ENCODE measurements at regions of chr3 and their contacts with region 1.

Region 1: DNA sequence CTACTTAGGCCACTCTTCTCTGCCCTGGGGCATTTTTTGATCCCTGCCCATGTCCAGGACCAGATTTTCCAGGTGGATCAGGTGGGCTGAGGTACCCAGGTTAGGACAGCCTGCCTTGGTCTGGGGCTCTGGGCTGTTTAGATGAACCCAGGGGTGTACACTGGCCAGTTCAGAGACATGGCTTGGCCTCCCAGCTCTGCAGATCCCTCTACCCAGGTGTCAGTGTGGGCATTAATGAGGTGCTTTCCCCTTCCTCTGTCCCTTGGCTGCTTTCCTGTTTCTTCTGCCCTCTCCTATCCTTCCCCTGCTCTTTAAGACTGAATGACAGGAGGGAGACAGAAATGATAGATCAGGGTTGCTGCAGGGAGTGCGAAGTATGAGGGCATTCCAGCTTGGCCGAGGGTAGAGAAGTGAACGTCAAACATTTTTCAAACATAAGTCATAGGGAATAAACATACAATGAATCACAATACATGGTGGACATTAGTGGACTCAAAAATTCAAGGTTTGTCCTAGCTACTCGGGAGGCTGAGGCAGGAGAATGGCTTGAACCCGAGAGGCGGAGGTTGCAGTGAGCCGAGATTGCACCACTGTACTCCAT is 30.5 kb downstream of the RTP1 start:
- DNase-seq: no peak
- H3K4me3 ChIP-seq: no peak overlapping the region
- H3K27ac ChIP-seq: no peak overlapping the region
- H3K4me1 ChIP-seq: no peaks in the 10 kb centered on the region
- H3K27me3 ChIP-seq: peaks cover 0 to 61% (median 0%) of the 10 kb centered on the region in 7 donors
- CTCF ChIP-seq: no peak
- POLR2A ChIP-seq: no peak

Region 2: DNA sequence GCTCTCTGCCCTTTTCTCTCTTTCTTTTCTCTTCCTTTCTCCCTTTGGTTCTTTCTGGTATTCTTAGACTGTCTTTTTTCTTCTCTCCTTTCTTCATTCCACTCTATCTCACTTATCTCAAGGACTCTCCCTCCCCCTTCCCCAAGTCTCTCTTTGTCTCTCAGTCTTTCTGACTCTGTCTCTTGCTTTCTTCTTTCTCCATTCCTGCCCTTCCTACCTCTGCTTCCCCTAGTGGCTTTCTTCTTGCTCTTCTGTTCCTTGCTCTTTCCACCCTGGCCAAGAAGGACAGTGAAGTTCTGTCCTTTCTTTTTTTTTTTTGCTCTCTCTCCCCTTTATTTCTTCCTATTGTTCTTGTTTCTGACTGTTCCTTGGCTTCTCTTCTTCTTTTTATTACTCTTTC is 66.2 kb before region 1 on chr3:
- intact Hi-C with region 1: no loop called
- DNase-seq: no peak
- H3K4me3 ChIP-seq: no peak overlapping the region
- H3K27ac ChIP-seq: no peak overlapping the region
- H3K4me1 ChIP-seq: peaks cover 0 to 4% (median 0%) of the 10 kb centered on the region in 6 donors
- H3K27me3 ChIP-seq: peaks cover 0 to 15% (median 0%) of the 10 kb centered on the region in 7 donors
- CTCF ChIP-seq: no peak
- POLR2A ChIP-seq: no peak

Region 3: GRCh38 chr3:187319699-187320302 is 92.0 kb after region 1 on chr3:
- intact Hi-C with region 1: loop called (anchors 5 kb)
- DNase-seq: peak; percentile 75
- H3K4me3 ChIP-seq: peak overlapping the region in 1 of 8 donors; percentile 53
- H3K27ac ChIP-seq: no peak overlapping the region
- H3K4me1 ChIP-seq: peaks cover 6 to 16% (median 13%) of the 10 kb centered on the region in 6 donors
- H3K27me3 ChIP-seq: peaks cover 0 to 50% (median 5%) of the 10 kb centered on the region in 7 donors
- CTCF ChIP-seq: peak; percentile 58 to 82 (median 75)
- POLR2A ChIP-seq: no peak

Region 4: DNA sequence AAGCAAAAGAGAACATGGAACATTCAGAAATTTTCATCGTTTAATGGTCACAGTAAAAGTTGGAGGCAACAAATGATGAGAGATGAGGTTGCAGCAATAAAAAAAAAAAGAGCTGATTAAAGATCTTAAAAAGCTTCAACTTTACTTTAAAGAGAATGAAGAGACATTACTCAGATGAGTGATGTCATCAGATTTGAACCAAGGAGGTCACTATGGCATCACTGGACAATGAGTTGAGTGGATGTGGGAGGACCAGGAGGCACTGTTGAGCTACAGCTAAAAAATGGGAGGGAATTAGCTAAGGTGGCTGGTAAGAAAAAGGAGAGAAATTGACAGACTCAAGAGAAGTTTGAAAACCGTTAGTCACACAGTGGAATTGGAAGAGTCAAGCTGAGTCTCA is 304.1 kb after region 1 on chr3:
- intact Hi-C with region 1: no loop called
- DNase-seq: no peak
- H3K4me3 ChIP-seq: no peak overlapping the region
- H3K27ac ChIP-seq: no peak overlapping the region
- H3K4me1 ChIP-seq: no peaks in the 10 kb centered on the region
- H3K27me3 ChIP-seq: peaks cover 0 to 20% (median 0%) of the 10 kb centered on the region in 7 donors
- CTCF ChIP-seq: no peak
- POLR2A ChIP-seq: no peak

Region 5: DNA sequence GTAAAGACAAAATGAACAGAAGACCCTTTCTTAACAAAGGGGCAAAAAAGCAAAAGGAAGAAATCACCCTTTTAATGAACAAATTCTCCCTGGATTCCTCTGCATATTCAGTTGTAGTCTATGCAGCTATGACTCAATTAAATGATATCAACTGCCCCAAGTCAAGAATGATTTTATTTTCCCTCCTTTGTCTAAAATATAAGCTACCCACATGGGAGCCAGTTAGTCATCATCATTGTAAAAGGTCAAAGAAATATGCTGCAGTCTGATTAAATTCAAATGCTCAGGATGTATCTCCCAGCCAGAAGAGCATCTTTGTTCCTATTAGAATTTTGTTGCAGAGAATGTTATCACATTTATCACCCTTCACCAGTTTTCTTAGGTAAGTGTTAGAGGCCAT is 358.5 kb after region 1 on chr3:
- intact Hi-C with region 1: no loop called
- DNase-seq: no peak
- H3K4me3 ChIP-seq: no peak overlapping the region
- H3K27ac ChIP-seq: no peak overlapping the region
- H3K4me1 ChIP-seq: no peaks in the 10 kb centered on the region
- H3K27me3 ChIP-seq: peaks cover 0 to 10% (median 0%) of the 10 kb centered on the region in 7 donors
- CTCF ChIP-seq: no peak
- POLR2A ChIP-seq: no peak

Measured in spleen (tissue), 13 donors.